Endothelial cell of umbilical vein (primary cell): ENCODE measurements at regions of chr2 and their contacts with region 1.

Region 1: GRCh38 chr2:11647834-11648600 is 22.0 kb downstream of the NTSR2 start:
- DNase-seq: peak; percentile 39
- H3K4me3 ChIP-seq: no peak overlapping the region
- H3K27ac ChIP-seq: no peak overlapping the region
- H3K4me1 ChIP-seq: no peaks in the 10 kb centered on the region
- H3K27me3 ChIP-seq: peaks cover 2 to 4% of the 10 kb centered on the region in 2 experiments
- CTCF ChIP-seq: peak; percentile 12 to 52
- POLR2A ChIP-seq: no peak

Region 2: GRCh38 chr2:11303290-11304013 is 344.6 kb before region 1 on chr2:
- CTCF ChIA-PET with region 1: no interaction called
- POLR2A ChIA-PET with region 1: no interaction called
- dilution Hi-C with region 1: no loop called
- intact Hi-C with region 1: no loop called
- DNase-seq: no peak
- H3K4me3 ChIP-seq: no peak overlapping the region
- H3K27ac ChIP-seq: no peak overlapping the region
- H3K4me1 ChIP-seq: no peaks in the 10 kb centered on the region
- H3K27me3 ChIP-seq: no peaks in the 10 kb centered on the region
- CTCF ChIP-seq: no peak
- POLR2A ChIP-seq: no peak

Region 3: DNA sequence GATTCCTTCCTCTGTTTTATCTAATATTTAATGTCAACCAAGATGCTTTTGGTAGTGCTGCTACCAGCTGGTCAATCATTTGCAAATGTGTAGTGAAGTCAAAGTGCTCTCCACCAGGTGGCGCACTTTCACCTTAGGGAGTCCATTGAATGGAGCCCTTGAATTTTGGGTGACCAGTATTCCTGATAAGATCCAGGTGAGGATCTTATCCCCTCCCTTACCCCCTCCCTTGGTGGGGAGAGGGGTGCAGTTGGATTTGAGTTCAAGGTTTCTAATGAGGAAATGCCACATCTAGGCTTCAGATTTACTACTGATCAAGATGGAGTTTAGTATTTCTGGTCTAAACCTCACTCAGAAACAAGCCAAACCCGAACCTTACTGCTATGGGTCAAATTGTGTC is 170.0 kb before region 1 on chr2:
- CTCF ChIA-PET with region 1: interaction called, 49 read pairs
- POLR2A ChIA-PET with region 1: no interaction called
- dilution Hi-C with region 1: no loop called
- intact Hi-C with region 1: loop called (anchors 1 kb)
- DNase-seq: peak; percentile 69
- H3K4me3 ChIP-seq: no peak overlapping the region
- H3K27ac ChIP-seq: no peak overlapping the region
- H3K4me1 ChIP-seq: no peaks in the 10 kb centered on the region
- H3K27me3 ChIP-seq: peaks cover 25 to 41% of the 10 kb centered on the region in 2 experiments
- CTCF ChIP-seq: peak; percentile 68 to 73
- POLR2A ChIP-seq: no peak

Region 4: GRCh38 chr2:11589316-11589940 is 58.6 kb before region 1 on chr2:
- CTCF ChIA-PET with region 1: interaction called, 13 read pairs
- POLR2A ChIA-PET with region 1: no interaction called
- dilution Hi-C with region 1: no loop called
- intact Hi-C with region 1: loop called (anchors 1 kb)
- DNase-seq: no peak
- H3K4me3 ChIP-seq: no peak overlapping the region
- H3K27ac ChIP-seq: no peak overlapping the region
- H3K4me1 ChIP-seq: no peaks in the 10 kb centered on the region
- H3K27me3 ChIP-seq: no peaks in the 10 kb centered on the region
- CTCF ChIP-seq: peak in 1 of 2 donors; percentile 27
- POLR2A ChIP-seq: no peak

Region 5: GRCh38 chr2:11866358-11867335 is 218.6 kb after region 1 on chr2:
- CTCF ChIA-PET with region 1: no interaction called
- POLR2A ChIA-PET with region 1: no interaction called
- dilution Hi-C with region 1: no loop called
- intact Hi-C with region 1: no loop called
- DNase-seq: no peak
- H3K4me3 ChIP-seq: no peak overlapping the region
- H3K27ac ChIP-seq: no peak overlapping the region
- H3K4me1 ChIP-seq: peaks cover 7% of the 10 kb centered on the region
- H3K27me3 ChIP-seq: peaks cover 5% of the 10 kb centered on the region in 2 experiments
- CTCF ChIP-seq: no peak
- POLR2A ChIP-seq: no peak